HepG2 (cell line): ENCODE measurements at regions of chr2 and their contacts with region 1.

Region 1: GRCh38 chr2:207473049-207473930 is 56.5 kb upstream of the CREB1 start:
- DNase-seq: peak; percentile 30
- ATAC-seq: peak; percentile 73
- H3K4me3 ChIP-seq: peak overlapping the region; percentile 6 to 19 (median 15); a peak in 2 of 6 replicates
- H3K27ac ChIP-seq: no peak overlapping the region
- H3K4me1 ChIP-seq: peaks cover 11% of the 10 kb centered on the region
- H3K27me3 ChIP-seq: no peaks in the 10 kb centered on the region
- CTCF ChIP-seq: peak; percentile 58
- EP300 ChIP-seq: no peak
- POLR2A ChIP-seq: no peak
- RAD21 ChIP-seq: no peak

Region 2: DNA sequence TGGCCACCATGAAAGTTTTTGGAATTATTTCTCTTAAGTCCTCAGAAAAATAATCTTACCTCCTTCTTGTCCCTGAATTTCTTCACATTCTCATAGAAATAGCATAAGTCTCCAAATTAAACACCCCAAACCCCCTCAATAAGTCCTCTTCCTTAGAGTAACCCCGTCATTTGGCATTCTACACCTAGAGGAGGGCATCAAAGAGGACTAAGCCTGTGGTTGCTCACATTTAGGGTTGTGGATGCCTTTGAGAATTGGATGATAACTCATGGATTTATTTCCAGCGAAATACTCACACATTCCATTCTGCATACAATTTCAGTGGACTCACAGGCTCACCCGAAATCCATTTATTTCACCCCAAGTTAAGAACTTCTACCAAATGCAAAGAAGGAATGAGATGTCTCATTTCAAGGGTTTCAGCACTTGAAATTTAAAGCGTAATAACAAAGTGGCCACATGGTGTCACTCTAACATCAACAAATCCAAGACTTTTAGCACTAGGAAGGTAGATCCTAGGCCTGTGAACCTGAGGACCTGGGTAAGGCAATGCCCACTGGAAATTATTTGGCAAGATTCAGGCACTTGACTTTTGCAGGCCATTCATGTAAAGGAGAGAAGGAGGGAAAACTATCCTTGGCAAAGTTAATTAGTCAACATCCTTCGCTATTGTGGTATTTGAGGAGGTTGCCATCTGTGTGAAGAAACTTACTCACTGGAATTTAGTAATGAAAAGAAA is 779.7 kb before region 1 on chr2:
- CTCF ChIA-PET with region 1: interaction called, 22 read pairs
- POLR2A ChIA-PET with region 1: no interaction called
- in situ Hi-C with region 1: loop called (anchors 5 kb)
- intact Hi-C with region 1: loop called (anchors 1 kb)
- DNase-seq: peak; percentile 65
- ATAC-seq: peak; percentile 93
- H3K4me3 ChIP-seq: no peak overlapping the region
- H3K27ac ChIP-seq: no peak overlapping the region
- H3K4me1 ChIP-seq: no peaks in the 10 kb centered on the region
- H3K27me3 ChIP-seq: peaks cover 0 to 7% of the 10 kb centered on the region in 2 experiments; a peak in 2 of 5 replicates
- CTCF ChIP-seq: peak; percentile 88
- EP300 ChIP-seq: no peak
- POLR2A ChIP-seq: no peak
- RAD21 ChIP-seq: peak; percentile 55; the same call in 1 of the 2 replicates

Region 3: DNA sequence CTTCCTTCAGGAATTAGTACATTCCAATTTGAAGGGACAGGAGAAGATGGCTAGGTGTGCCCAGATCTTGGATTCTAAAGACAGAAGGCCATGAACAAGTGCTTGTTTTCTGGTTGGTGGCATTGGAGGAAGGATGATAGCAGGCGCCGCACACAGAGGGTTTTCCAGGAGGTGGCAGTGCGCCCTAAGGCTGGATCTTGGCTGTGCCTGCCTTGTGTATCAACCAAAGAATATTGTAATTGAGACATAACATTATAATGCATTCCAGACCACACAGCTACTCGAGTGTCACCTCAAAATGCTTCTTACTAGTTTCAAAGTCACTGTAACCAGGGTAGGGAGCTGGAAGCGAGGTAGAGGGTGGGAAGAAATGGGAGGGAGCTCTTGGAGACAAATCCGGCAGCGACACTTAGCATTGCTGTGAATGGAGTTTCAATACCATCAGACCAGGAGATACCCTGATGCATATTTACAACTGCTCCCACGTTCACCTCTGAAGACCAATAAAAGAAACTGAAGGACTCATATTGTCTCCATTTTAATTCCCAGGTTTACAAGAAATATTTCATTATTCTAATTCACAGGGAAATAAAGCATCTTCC is 491.4 kb before region 1 on chr2:
- CTCF ChIA-PET with region 1: interaction called, 8 read pairs
- POLR2A ChIA-PET with region 1: no interaction called
- in situ Hi-C with region 1: loop called (anchors 5 kb)
- intact Hi-C with region 1: loop called (anchors 1 kb)
- DNase-seq: no peak
- ATAC-seq: peak; percentile 86
- H3K4me3 ChIP-seq: no peak overlapping the region
- H3K27ac ChIP-seq: no peak overlapping the region
- H3K4me1 ChIP-seq: no peaks in the 10 kb centered on the region
- H3K27me3 ChIP-seq: peaks cover 0 to 6% of the 10 kb centered on the region in 2 experiments; a peak in 1 of 5 replicates
- CTCF ChIP-seq: peak; percentile 67
- EP300 ChIP-seq: no peak
- POLR2A ChIP-seq: no peak
- RAD21 ChIP-seq: peak; percentile 61

Region 4: DNA sequence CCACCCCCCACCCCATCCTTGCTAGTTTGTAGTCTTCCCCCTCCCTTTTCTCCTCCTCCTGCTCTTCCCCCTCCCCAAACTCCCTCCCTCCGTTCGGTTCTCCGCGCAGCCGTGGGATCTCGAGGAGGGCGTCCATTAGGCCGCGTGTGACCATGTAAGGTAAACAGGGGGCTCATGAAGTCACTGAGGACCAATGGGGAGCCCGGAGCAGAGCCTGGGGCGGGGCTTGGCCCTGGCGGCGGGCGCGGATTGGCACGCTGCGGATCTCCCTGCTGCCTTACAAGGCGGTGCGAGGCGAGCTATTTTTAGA is 307.3 kb before region 1 on chr2:
- CTCF ChIA-PET with region 1: no interaction called
- POLR2A ChIA-PET with region 1: no interaction called
- in situ Hi-C with region 1: no loop called
- intact Hi-C with region 1: loop called (anchors 10 kb)
- DNase-seq: peak; percentile 94
- ATAC-seq: peak; percentile 94
- H3K4me3 ChIP-seq: peak overlapping the region; percentile 56 to 78 (median 69); a peak in 5 of 6 replicates
- H3K27ac ChIP-seq: peak overlapping the region; percentile 96
- H3K4me1 ChIP-seq: peaks cover 41% of the 10 kb centered on the region
- H3K27me3 ChIP-seq: peaks cover 0 to 4% of the 10 kb centered on the region in 2 experiments; a peak in 2 of 5 replicates
- CTCF ChIP-seq: no peak
- EP300 ChIP-seq: peak in 1 of 2 experiments; percentile 27; a peak in 1 of 4 replicates
- POLR2A ChIP-seq: no peak
- RAD21 ChIP-seq: no peak

Region 5: GRCh38 chr2:207458582-207458981 is 14.7 kb before region 1 on chr2:
- CTCF ChIA-PET with region 1: no interaction called
- POLR2A ChIA-PET with region 1: no interaction called
- in situ Hi-C with region 1: no loop called
- intact Hi-C with region 1: no loop called
- DNase-seq: no peak
- ATAC-seq: no peak
- H3K4me3 ChIP-seq: no peak overlapping the region
- H3K27ac ChIP-seq: no peak overlapping the region
- H3K4me1 ChIP-seq: no peaks in the 10 kb centered on the region
- H3K27me3 ChIP-seq: no peaks in the 10 kb centered on the region; a peak in 1 of 5 replicates
- CTCF ChIP-seq: no peak
- EP300 ChIP-seq: no peak
- POLR2A ChIP-seq: no peak
- RAD21 ChIP-seq: no peak